ENCODE measurements at regions of chr6 and their contacts with region 1.

Region 1: DNA sequence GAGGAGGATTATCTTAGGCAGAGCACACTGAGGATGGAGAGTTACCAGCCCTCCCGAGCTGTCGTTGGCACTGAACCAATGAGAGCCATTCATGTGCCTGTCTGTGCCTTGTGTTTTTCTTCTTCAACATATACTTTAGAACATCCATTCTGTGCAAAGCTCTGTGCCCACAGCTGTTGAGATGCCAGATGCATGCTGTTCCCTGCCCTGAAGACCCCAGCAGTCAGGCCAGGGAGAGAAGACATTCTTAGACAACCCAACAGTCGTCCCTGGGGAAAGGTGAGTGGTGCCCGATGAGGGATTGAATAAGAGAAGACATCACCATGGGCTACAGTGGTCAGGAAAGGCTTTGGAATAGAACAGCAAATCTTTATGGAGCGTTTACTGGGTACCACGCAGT is 114.1 kb downstream of the NRN1 start:
- DNase-seq: no peak
- H3K4me3 ChIP-seq: peak overlapping the region in 1 of 2 donors; percentile 24
- H3K4me3 Mint-ChIP-seq: peak overlapping the region in 7 of 8 donors; percentile 90 to 94 (median 92)
- H3K27ac ChIP-seq: no peak overlapping the region
- H3K27ac Mint-ChIP-seq: peak overlapping the region; percentile 12 to 96 (median 90)
- H3K4me1 ChIP-seq: peaks cover 10% of the 10 kb centered on the region
- H3K4me1 Mint-ChIP-seq: peaks cover 2 to 9% (median 7%) of the 10 kb centered on the region in 4 donors
- H3K27me3 ChIP-seq: no peaks in the 10 kb centered on the region
- H3K27me3 Mint-ChIP-seq: no peaks in the 10 kb centered on the region

Region 2: DNA sequence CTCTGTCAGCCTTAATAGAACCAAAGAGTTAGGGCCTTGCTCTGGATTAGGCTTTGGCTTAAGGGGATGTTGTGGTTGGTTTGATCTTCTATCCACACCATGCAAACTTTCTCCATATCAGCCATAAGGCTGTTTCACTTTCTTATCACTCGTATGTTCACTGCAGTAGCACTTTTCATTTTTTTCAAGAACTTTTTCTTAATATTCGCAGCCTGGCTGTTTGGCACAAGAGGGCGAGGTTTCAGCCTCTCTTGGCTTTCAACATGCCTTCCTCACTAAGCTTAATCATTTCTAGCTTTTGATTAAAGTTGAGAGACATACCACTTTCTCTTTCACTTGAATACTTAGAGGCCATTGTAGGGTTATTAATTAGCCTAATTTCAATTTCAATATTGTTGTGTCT is 79.0 kb before region 1 on chr6:
- CTCF ChIA-PET with region 1: no interaction called
- POLR2A ChIA-PET with region 1: interaction called, 6 read pairs
- intact Hi-C with region 1: loop called (anchors 5 kb)
- DNase-seq: peak in 4 of 5 donors; percentile 8 to 43 (median 21)
- H3K4me3 ChIP-seq: peak overlapping the region in 1 of 2 donors; percentile 8
- H3K4me3 Mint-ChIP-seq: peak overlapping the region; percentile 56 to 82 (median 72)
- H3K27ac ChIP-seq: no peak overlapping the region
- H3K27ac Mint-ChIP-seq: peak overlapping the region; percentile 52 to 93 (median 77)
- H3K4me1 ChIP-seq: peaks cover 27% of the 10 kb centered on the region
- H3K4me1 Mint-ChIP-seq: peaks cover 20 to 37% (median 27%) of the 10 kb centered on the region in 4 donors
- H3K27me3 ChIP-seq: no peaks in the 10 kb centered on the region
- H3K27me3 Mint-ChIP-seq: peaks cover 0 to under 1% of the 10 kb centered on the region in 2 donors

Measured in CD4-positive, alpha-beta memory T cell (primary cell).